CD8-positive, alpha-beta T cell (primary cell): ENCODE measurements at regions of chr2 and their contacts with region 1.

Region 1: GRCh38 chr2:106098081-106098480 is 96.0 kb downstream of the UXS1 start:
- DNase-seq: peak in 4 of 9 experiments; percentile 25 to 56 (median 43)
- ATAC-seq: no peak
- H3K4me3 ChIP-seq: no peak overlapping the region
- H3K4me3 Mint-ChIP-seq: no peak overlapping the region
- H3K27ac ChIP-seq: no peak overlapping the region
- H3K27ac Mint-ChIP-seq: peak overlapping the region; percentile 95
- H3K4me1 ChIP-seq: peaks cover 53% of the 10 kb centered on the region
- H3K4me1 Mint-ChIP-seq: peaks cover 62% of the 10 kb centered on the region
- H3K27me3 ChIP-seq: no peaks in the 10 kb centered on the region
- H3K27me3 Mint-ChIP-seq: no peaks in the 10 kb centered on the region
- CTCF ChIP-seq: peak; percentile 16

Region 2: GRCh38 chr2:105576440-105577252 is 521.4 kb before region 1 on chr2:
- CTCF ChIA-PET with region 1: interaction called, 40 read pairs
- POLR2A ChIA-PET with region 1: no interaction called
- intact Hi-C with region 1: loop called (anchors 1 to 2 kb)
- DNase-seq: peak in 3 of 9 experiments; percentile 49 to 64 (median 56)
- ATAC-seq: peak; percentile 71
- H3K4me3 ChIP-seq: no peak overlapping the region
- H3K4me3 Mint-ChIP-seq: no peak overlapping the region
- H3K27ac ChIP-seq: no peak overlapping the region
- H3K27ac Mint-ChIP-seq: peak overlapping the region; percentile 85
- H3K4me1 ChIP-seq: peaks cover 12% of the 10 kb centered on the region
- H3K4me1 Mint-ChIP-seq: peaks cover 37% of the 10 kb centered on the region
- H3K27me3 ChIP-seq: no peaks in the 10 kb centered on the region
- H3K27me3 Mint-ChIP-seq: no peaks in the 10 kb centered on the region
- CTCF ChIP-seq: peak; percentile 76

Region 3: GRCh38 chr2:105782123-105782522 is 316.0 kb before region 1 on chr2:
- CTCF ChIA-PET with region 1: interaction called, 3 read pairs
- POLR2A ChIA-PET with region 1: interaction called, 3 read pairs
- intact Hi-C with region 1: loop called (anchors 5 kb)
- DNase-seq: peak in 3 of 9 experiments; percentile 40 to 66 (median 57)
- ATAC-seq: peak; percentile 41
- H3K4me3 ChIP-seq: no peak overlapping the region
- H3K4me3 Mint-ChIP-seq: peak overlapping the region; percentile 81
- H3K27ac ChIP-seq: peak overlapping the region in 1 of 2 experiments; percentile 31
- H3K27ac Mint-ChIP-seq: peak overlapping the region; percentile 98
- H3K4me1 ChIP-seq: peaks cover 99% of the 10 kb centered on the region
- H3K4me1 Mint-ChIP-seq: peaks cover 94% of the 10 kb centered on the region
- H3K27me3 ChIP-seq: no peaks in the 10 kb centered on the region
- H3K27me3 Mint-ChIP-seq: no peaks in the 10 kb centered on the region
- CTCF ChIP-seq: peak; percentile 62

Region 4: DNA sequence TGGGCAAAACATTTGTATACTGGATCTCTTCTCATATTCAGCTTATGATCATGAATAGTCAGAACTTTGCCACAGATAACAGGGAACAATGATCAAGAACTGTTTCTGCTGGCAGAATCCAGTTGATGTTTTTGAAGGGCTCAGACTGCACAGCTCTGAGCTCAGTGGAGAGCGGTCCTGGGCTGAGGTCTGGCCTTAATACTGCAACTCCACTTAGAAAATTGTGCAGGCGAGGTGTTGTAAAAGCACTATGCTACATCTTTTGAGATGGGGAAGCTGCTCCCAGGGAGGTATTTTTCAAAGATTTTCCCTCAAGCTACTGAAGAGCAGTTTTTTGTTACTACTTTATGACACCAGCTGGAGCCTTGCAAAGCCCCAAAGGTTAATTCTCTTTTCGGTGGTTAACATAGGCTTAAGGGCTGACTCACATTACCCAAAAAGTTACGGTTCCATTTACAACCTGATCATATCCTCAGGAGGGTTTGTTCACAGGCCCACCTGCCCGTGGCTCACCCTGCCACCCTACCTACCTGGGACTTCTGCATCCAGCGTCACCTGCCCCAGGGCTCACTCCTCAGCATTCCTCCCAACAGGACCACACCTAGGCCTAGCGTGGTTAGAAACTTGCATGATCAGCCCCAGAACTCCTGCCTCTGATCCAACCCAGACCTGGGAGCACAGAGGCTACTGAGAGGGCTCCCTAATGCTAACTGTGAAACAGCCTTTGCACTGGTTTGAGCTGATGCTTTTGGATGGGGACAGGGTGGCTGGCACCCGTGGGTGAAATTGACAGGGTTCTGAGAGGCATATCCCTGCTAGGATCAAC is 239.0 kb before region 1 on chr2:
- CTCF ChIA-PET with region 1: interaction called, 5 read pairs
- POLR2A ChIA-PET with region 1: interaction called, 5 read pairs
- intact Hi-C with region 1: loop called in 1 of 2 experiments (anchors 1 kb)
- DNase-seq: peak in 5 of 9 experiments; percentile 29 to 49 (median 44)
- ATAC-seq: peak; percentile 32
- H3K4me3 ChIP-seq: no peak overlapping the region
- H3K4me3 Mint-ChIP-seq: peak overlapping the region; percentile 57
- H3K27ac ChIP-seq: peak overlapping the region; percentile 32 to 71
- H3K27ac Mint-ChIP-seq: peak overlapping the region; percentile 94
- H3K4me1 ChIP-seq: peaks cover 92% of the 10 kb centered on the region
- H3K4me1 Mint-ChIP-seq: peaks cover 91% of the 10 kb centered on the region
- H3K27me3 ChIP-seq: no peaks in the 10 kb centered on the region
- H3K27me3 Mint-ChIP-seq: no peaks in the 10 kb centered on the region
- CTCF ChIP-seq: no peak

Region 5: GRCh38 chr2:106053116-106053515 is 45.0 kb before region 1 on chr2:
- CTCF ChIA-PET with region 1: no interaction called
- POLR2A ChIA-PET with region 1: interaction called, 3 read pairs
- intact Hi-C with region 1: loop called (anchors 5 kb)
- DNase-seq: peak in 2 of 9 experiments; percentile 48 to 66
- ATAC-seq: peak; percentile 28
- H3K4me3 ChIP-seq: no peak overlapping the region
- H3K4me3 Mint-ChIP-seq: peak overlapping the region; percentile 62
- H3K27ac ChIP-seq: no peak overlapping the region
- H3K27ac Mint-ChIP-seq: peak overlapping the region; percentile 66
- H3K4me1 ChIP-seq: peaks cover 59% of the 10 kb centered on the region
- H3K4me1 Mint-ChIP-seq: peaks cover 75% of the 10 kb centered on the region
- H3K27me3 ChIP-seq: no peaks in the 10 kb centered on the region
- H3K27me3 Mint-ChIP-seq: no peaks in the 10 kb centered on the region
- CTCF ChIP-seq: no peak

Region 6: DNA sequence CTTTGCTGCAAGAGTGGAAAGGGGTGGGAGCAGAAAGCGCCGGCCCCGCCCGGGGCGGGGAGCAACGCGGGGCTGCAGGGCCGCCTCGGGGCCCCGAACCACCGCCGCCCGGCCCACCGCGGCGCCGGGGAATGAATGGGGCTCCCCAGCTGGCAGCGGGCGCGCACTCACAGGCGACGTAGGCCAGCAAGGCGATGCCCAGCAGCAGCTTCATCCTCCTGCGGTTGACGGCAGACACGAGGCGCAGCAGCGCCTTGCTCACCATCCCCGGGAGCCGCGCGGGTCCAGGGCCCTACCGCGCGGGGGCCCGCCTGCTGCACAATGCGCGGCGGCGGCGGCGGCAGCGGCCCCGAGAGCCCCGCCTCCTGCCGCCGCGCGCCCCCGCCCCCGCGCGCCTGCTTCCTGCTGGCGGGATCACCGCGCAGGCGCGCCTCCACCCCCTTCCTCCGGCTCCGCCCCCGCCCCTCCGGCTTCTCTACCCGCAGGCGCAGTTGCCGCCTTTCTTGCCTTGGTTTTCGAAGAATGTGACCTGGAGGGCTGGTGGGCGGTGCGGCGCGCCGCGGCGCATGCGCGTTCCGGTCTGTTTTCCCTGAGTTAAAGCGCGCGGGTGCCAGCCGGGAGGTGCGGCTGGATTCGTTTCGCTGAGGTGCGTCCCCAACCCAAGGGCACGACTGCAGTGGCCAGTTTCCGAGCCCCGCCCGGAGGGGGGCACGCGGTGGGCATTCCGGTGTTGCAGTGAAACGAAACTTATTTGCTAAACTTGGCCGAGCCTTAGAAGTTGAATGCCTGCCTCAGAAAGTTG is 96.1 kb after region 1 on chr2 and contains the start of gene UXS1:
- CTCF ChIA-PET with region 1: no interaction called
- POLR2A ChIA-PET with region 1: interaction called, 3 read pairs
- intact Hi-C with region 1: loop called in 1 of 2 experiments (anchors 2 kb)
- DNase-seq: peak; percentile 97 to 99 (median 98)
- ATAC-seq: peak; percentile 80
- H3K4me3 ChIP-seq: peak within 1 kb of the TSS; percentile 80 to 90
- H3K4me3 Mint-ChIP-seq: peak within 1 kb of the TSS; percentile 97
- H3K27ac ChIP-seq: peak within 1 kb of the TSS; percentile 70 to 77
- H3K27ac Mint-ChIP-seq: peak within 1 kb of the TSS; percentile 97
- H3K4me1 ChIP-seq: peaks cover 39% of the 10 kb centered on the region
- H3K4me1 Mint-ChIP-seq: peaks cover 46% of the 10 kb centered on the region
- H3K27me3 ChIP-seq: no peaks in the 10 kb centered on the region
- H3K27me3 Mint-ChIP-seq: no peaks in the 10 kb centered on the region
- CTCF ChIP-seq: no peak
- total RNA-seq, gene UXS1: 62.1 to 70.8 TPM